Prostate gland (tissue), 2 donors: ENCODE measurements at regions of chr2 and their contacts with region 1.

Region 1: DNA sequence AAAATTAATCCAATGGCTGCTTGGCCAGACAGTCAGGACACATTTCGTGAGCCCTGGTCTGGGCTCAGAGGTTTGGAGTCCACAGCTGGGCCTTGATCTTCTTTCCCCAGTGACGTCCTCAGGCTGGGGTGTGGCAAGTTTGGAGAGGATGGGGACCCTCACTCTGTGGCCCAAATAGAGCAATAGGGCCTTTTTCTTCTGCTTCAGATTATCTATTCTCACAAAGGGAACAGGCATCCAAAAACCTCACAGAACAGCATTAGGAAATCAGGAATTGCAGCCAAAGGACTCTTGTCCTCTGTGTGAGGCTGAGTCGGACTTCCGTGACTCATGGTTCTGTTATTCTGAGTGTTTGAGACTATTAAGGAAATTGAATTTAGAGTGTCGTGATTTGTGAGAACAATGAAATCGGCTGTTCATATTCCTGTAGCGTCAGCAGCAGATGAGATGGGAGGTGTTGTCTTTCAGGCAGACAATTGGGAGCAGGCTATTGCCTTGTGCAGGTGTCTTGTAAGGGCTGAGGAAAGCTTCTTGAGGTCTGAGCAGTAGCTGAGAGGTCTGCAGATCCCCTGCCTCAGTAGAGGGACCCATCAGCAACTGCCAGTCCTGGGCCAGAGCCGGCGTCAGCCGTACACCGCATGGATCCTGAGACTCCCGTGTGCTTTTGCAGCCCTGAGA is 113.8 kb downstream of the SH3RF3 start:
- DNase-seq: peak; percentile 17
- H3K4me3 ChIP-seq: no peak overlapping the region
- H3K27ac ChIP-seq: peak overlapping the region; percentile 52 to 68
- H3K4me1 ChIP-seq: no peaks in the 10 kb centered on the region
- H3K27me3 ChIP-seq: no peaks in the 10 kb centered on the region
- CTCF ChIP-seq: no peak
- POLR2A ChIP-seq: no peak

Region 2: DNA sequence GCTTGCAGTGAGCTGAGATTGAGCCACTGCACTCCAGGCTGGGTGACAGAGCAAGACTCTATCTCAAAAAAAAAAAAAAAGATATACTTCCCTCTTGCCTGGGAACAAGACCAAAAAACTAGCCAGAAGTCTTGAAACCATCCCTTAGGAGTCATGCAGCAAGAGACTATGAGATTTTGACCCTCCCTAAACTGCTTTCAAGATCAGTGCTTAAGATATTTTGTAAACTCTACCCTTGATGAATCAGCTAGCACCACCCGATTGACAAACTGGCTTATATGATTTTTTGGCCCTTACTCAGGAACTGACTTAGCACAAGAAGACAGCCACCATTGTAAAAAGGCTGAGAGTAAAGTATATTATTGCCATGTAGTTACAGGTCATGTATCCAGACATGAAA is 999.2 kb before region 1 on chr2:
- intact Hi-C with region 1: no loop called
- DNase-seq: no peak
- H3K4me3 ChIP-seq: no peak overlapping the region
- H3K27ac ChIP-seq: no peak overlapping the region
- H3K4me1 ChIP-seq: no peaks in the 10 kb centered on the region
- H3K27me3 ChIP-seq: no peaks in the 10 kb centered on the region
- CTCF ChIP-seq: no peak
- POLR2A ChIP-seq: no peak

Region 3: GRCh38 chr2:109173311-109174171 is 69.3 kb before region 1 on chr2:
- intact Hi-C with region 1: loop called (anchors 5 kb)
- DNase-seq: peak; percentile 9
- H3K4me3 ChIP-seq: no peak overlapping the region
- H3K27ac ChIP-seq: peak overlapping the region; percentile 59 to 67
- H3K4me1 ChIP-seq: no peaks in the 10 kb centered on the region
- H3K27me3 ChIP-seq: no peaks in the 10 kb centered on the region
- CTCF ChIP-seq: no peak
- POLR2A ChIP-seq: no peak

Region 4: DNA sequence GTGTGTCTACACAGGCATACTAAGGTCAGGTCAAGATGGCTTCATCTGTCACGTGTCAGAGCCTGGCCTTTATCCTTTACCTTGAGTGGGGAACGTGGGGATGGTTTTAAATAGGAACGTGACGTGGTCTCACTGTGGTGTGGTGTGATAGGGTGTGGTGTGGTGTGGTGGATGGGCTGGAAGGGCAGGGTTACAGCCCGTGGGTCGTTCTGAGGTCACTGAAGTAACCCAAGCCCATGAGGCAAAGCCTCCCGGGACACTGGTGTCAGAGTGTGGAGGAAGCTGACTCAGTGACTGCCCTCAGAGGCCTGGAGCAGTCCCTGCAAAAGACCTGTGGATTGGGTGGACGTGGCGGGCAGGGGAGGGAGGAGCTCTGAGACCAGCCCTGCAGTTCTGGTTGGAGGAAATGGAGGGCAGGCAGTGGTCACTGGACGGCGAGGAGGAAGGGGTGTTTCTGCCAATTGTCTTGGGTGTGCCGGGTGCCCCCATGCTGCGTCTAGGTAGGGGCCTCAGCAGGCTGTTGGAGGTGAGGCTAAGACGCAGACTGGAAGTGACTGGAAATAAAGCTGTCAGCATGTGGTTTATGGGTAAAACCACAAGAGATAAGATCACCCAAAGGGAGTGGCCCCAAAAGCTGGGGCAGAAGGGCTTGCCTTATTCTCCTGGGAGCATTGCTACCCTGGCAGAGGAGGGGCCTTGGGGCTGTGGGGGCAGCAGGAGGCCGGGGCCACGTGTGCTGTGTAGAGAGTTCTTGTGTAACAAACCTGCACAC is 29.0 kb before region 1 on chr2:
- intact Hi-C with region 1: no loop called
- DNase-seq: peak; percentile 37
- H3K4me3 ChIP-seq: no peak overlapping the region
- H3K27ac ChIP-seq: no peak overlapping the region
- H3K4me1 ChIP-seq: peaks cover 3% of the 10 kb centered on the region
- H3K27me3 ChIP-seq: no peaks in the 10 kb centered on the region
- CTCF ChIP-seq: no peak
- POLR2A ChIP-seq: no peak

Region 5: GRCh38 chr2:109402180-109402579 is 159.4 kb after region 1 on chr2:
- intact Hi-C with region 1: no loop called
- DNase-seq: no peak
- H3K4me3 ChIP-seq: no peak overlapping the region
- H3K27ac ChIP-seq: no peak overlapping the region
- H3K4me1 ChIP-seq: no peaks in the 10 kb centered on the region
- H3K27me3 ChIP-seq: no peaks in the 10 kb centered on the region
- CTCF ChIP-seq: no peak
- POLR2A ChIP-seq: no peak